Posterior vena cava (tissue), 2 donors: ENCODE measurements at regions of chr13 and their contacts with region 1.

Region 1: GRCh38 chr13:97018029-97018831 is 24.0 kb upstream of the OXGR1 start:
- DNase-seq: no peak

Region 2: GRCh38 chr13:97809576-97809975 is 791.3 kb after region 1 on chr13:
- intact Hi-C with region 1: loop called in 1 of 2 experiments (anchors 10 kb)
- DNase-seq: no peak